Endothelial cell of umbilical vein (primary cell): ENCODE measurements at regions of chr18 and their contacts with region 1.

Region 1: DNA sequence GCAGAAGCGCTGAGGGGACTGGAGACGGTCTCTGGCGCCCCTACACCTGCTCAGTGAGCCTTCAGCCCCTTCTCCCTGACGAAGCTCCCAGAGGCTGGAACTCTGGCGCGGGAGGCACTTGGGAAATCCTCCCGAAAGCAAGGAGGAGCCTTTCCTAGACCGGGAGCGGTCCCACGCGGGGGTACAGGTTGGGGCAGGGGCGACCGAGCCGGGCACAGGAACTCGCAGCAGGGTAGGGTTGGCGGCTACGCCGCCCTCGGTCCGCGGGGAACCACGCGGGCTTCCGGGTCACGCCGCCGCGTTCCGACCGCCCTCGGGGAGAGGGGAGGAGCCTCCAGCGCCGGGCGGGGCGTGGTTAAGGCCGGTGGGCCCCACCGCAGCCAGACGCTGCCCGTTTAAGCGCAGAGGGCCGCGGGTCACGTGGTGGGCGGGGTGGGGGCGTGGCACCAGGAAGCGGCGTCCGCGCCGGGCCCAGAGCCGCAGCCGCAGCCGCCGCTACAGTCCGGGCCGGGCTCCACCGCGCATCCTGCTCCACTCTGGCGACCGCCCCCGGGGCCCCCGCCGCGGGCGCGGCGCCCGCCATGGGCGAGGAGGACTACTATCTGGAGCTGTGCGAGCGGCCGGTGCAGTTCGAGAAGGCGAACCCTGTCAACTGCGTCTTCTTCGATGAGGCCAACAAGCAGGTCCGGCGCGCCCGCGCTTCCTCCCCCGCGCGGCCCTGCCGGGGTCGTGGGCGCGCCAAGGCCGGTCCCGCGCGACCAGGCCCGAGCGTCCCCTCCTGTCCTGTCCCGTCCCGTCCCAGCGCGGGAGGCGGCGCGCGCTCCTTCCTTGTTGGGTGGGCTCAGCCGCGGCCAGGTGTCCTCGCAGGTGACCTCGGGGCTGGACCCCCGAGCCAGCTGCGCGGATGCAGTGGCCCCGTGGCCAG is at the start of gene RMC1:
- DNase-seq: peak; percentile 92
- H3K4me3 ChIP-seq: peak within 1 kb of the TSS; percentile 54 to 86 (median 75)
- H3K27ac ChIP-seq: peak within 1 kb of the TSS; percentile 60
- H3K4me1 ChIP-seq: peaks cover 18% of the 10 kb centered on the region
- H3K27me3 ChIP-seq: no peaks in the 10 kb centered on the region
- CTCF ChIP-seq: peak in 1 of 2 donors; percentile 5
- POLR2A ChIP-seq: peak; percentile 88
- total RNA-seq, gene RMC1: 27.8 and 29.7 TPM in 2 replicates

Region 2: DNA sequence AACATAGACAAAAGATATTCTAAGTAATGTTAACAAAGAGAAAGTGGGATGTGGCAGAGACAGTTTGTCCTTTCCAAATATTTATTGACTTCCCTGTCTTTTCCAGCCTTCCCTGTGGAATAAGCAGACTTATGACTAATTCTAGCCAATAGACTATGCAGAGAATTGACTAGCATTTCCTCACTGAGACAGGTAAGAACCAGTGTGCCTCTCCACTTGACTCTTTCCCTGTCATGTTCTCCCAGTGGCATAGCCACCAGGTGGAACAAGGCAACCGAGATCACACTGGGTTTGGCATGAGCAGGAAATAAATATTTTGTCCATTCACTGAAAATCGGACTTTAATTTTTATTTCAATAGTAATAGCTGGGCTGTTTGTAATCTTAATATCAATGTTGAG is 917.5 kb before region 1 on chr18:
- CTCF ChIA-PET with region 1: no interaction called
- POLR2A ChIA-PET with region 1: no interaction called
- dilution Hi-C with region 1: no loop called
- intact Hi-C with region 1: no loop called
- DNase-seq: no peak
- H3K4me3 ChIP-seq: no peak overlapping the region
- H3K27ac ChIP-seq: no peak overlapping the region
- H3K4me1 ChIP-seq: no peaks in the 10 kb centered on the region
- H3K27me3 ChIP-seq: peaks cover 0 to 2% of the 10 kb centered on the region in 2 experiments
- CTCF ChIP-seq: no peak
- POLR2A ChIP-seq: no peak

Region 3: DNA sequence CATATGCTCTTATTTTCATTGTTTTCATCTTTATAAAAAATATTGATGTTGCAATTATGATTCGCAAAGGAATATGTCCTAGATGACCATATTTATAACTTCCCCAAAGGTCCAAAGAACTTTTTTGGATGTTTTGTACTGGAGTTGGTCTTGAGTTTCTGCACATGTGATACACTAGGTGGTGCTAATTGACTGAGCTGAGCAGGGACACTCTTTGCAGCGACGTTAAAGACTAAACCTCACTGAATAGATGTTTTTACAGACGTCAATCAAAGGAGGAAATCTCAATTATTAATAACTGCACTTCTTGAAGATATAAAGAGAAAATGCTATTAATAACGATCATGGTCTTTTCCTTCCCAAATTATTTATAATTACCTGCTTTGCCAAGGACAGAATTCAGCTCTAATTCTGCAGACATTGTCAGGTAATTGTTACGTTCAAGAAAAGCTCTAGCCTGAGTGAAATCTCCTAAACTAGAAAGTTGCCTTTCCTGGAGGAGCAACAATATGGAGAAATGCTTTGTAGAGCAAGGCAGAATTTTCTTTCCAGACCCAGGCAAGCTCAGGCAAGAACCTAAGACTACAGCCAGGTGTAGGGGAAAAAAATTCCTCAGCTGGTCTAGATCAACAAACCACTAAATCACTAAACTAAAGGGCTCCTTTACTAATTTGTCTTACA is 689.5 kb before region 1 on chr18:
- CTCF ChIA-PET with region 1: no interaction called
- POLR2A ChIA-PET with region 1: interaction called, 5 read pairs
- dilution Hi-C with region 1: no loop called
- intact Hi-C with region 1: loop called (anchors 5 kb)
- DNase-seq: peak; percentile 56
- H3K4me3 ChIP-seq: no peak overlapping the region
- H3K27ac ChIP-seq: no peak overlapping the region
- H3K4me1 ChIP-seq: peaks cover 11% of the 10 kb centered on the region
- H3K27me3 ChIP-seq: peaks cover 30 to 44% of the 10 kb centered on the region in 2 experiments
- CTCF ChIP-seq: peak; percentile 22 to 46
- POLR2A ChIP-seq: no peak

Region 4: DNA sequence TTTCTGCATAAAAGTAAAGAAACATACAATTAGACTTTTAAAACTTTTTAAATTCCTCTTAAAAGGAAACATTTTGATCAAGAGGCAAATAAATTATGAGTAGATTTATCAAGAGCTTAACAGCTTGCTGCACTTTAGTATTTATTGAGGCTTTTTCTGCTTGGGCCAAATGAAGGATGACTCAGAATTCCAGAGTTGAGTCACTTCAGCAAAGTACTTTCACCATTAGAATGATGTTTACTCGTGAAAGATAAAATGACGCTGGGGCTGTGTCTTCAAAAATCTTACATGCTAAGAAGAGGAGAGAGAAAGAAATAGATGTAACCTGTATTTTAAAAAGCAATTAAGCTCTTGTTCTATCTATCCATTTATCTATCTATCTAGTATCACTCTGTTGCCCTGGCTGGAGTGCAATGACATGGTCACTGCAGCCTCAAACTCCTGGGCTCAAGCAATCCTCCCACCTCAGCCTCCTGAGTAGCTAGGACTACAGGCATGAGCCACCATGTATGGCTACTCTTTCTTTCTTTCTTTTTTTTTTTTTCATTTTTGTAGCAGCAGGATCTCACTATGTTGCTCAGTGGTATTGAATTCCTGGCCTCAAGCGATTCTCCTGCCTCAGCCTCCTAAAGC is 125.5 kb before region 1 on chr18:
- CTCF ChIA-PET with region 1: no interaction called
- POLR2A ChIA-PET with region 1: no interaction called
- dilution Hi-C with region 1: no loop called
- intact Hi-C with region 1: no loop called
- DNase-seq: peak; percentile 90
- H3K4me3 ChIP-seq: no peak overlapping the region
- H3K27ac ChIP-seq: peak overlapping the region; percentile 78
- H3K4me1 ChIP-seq: peaks cover 36% of the 10 kb centered on the region
- H3K27me3 ChIP-seq: no peaks in the 10 kb centered on the region
- CTCF ChIP-seq: no peak
- POLR2A ChIP-seq: no peak

Region 5: GRCh38 chr18:23437357-23438045 is 65.8 kb before region 1 on chr18:
- CTCF ChIA-PET with region 1: interaction called, 6 read pairs
- POLR2A ChIA-PET with region 1: no interaction called
- dilution Hi-C with region 1: no loop called
- intact Hi-C with region 1: loop called (anchors 1 kb)
- DNase-seq: peak; percentile 71
- H3K4me3 ChIP-seq: peak overlapping the region; percentile 25 to 98 (median 76)
- H3K27ac ChIP-seq: peak overlapping the region; percentile 1
- H3K4me1 ChIP-seq: peaks cover 4% of the 10 kb centered on the region
- H3K27me3 ChIP-seq: no peaks in the 10 kb centered on the region
- CTCF ChIP-seq: no peak
- POLR2A ChIP-seq: peak; percentile 67

Region 6: GRCh38 chr18:23479829-23480505 is 23.3 kb before region 1 on chr18:
- CTCF ChIA-PET with region 1: interaction called, 20 read pairs
- POLR2A ChIA-PET with region 1: no interaction called
- dilution Hi-C with region 1: no loop called
- intact Hi-C with region 1: no loop called
- DNase-seq: no peak
- H3K4me3 ChIP-seq: no peak overlapping the region
- H3K27ac ChIP-seq: no peak overlapping the region
- H3K4me1 ChIP-seq: peaks cover 8% of the 10 kb centered on the region
- H3K27me3 ChIP-seq: no peaks in the 10 kb centered on the region
- CTCF ChIP-seq: no peak
- POLR2A ChIP-seq: no peak

Region 7: DNA sequence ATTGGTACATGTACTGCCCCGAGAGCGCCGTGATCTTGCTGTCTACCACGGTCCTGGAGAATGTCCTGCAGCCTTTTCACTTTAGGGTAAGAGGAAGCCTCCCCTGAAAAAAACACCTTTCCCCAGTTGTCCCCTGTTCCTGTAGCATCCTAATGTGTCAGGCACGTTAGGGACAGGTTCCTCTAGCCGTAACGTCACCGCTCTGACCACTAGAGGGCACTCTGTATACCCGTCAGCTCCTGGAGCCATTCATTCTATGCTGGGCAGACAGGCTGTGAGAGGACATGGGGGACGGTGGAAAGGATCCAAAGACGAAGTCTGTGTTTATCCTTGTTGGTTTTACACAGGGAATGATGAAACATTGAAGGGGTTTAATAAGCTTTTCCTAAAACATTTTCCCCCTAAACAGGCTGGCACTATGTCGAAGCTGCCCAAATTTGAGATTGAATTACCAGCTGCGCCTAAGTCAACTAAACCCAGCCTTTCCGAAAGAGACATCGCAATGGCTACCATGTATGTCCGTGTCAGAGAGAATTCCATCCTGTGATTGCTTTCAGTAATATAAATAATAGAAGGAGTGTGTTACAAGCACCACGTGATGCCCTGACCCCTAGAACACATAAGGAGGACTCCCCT is 12.7 kb after region 1 on chr18:
- CTCF ChIA-PET with region 1: interaction called, 18 read pairs
- POLR2A ChIA-PET with region 1: no interaction called
- dilution Hi-C with region 1: no loop called
- intact Hi-C with region 1: loop called (anchors 2 kb)
- DNase-seq: peak; percentile 71
- H3K4me3 ChIP-seq: no peak overlapping the region
- H3K27ac ChIP-seq: no peak overlapping the region
- H3K4me1 ChIP-seq: peaks cover 11% of the 10 kb centered on the region
- H3K27me3 ChIP-seq: no peaks in the 10 kb centered on the region
- CTCF ChIP-seq: peak; percentile 89 to 94
- POLR2A ChIP-seq: no peak